ENCODE measurements at regions of chr5 and their contacts with region 1.

Region 1: DNA sequence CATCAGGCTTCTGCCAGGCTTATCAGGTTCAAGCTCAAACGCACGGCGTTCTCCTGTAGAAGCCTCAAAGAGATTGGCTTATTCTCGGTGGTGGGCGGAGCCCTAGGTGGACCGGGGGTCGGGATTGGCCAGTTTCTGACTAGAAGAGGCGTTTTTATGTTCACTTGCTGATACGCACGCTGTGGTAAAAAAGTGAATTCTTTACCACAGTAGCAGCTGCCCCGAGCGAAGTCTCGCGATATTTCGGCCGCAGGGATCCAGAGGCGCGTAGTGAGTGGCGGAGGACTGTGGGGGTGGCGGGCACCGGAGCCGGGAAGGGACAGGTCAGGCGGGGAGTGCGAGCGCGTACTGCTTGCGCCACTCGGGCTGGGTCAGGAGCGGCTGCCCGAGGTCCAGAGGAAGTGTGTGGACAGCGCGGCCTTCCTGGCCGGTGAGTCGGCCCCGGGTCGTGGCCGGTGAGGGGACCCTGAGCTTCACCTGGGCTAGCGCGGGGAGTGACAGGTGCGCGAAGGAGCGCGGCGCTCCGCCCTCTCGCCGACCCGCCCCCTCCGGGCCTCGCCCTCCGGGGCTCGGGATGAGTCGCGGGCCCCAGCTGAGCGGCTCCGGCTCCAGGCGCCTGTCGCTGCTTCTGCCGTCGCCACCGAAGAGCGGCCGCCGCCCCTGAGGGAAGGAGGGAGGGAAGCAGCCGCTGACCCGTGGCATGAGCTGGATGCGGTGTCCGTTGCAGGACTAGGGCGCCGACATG is at the start of gene DMXL1:
- DNase-seq: peak; percentile 88 to 99 (median 92)
- ATAC-seq: peak; percentile 86
- H3K4me3 ChIP-seq: peak within 1 kb of the TSS; percentile 73
- H3K27ac ChIP-seq: peak within 1 kb of the TSS; percentile 84
- H3K4me1 ChIP-seq: peaks cover 7 to 10% of the 10 kb centered on the region in 2 experiments; a peak in 3 of 5 replicates
- H3K27me3 ChIP-seq: no peaks in the 10 kb centered on the region
- CTCF ChIP-seq: no peak; a peak in 1 of 6 replicates
- EP300 ChIP-seq: no peak
- POLR2A ChIP-seq: peak; percentile 86
- RAD21 ChIP-seq: no peak; a peak in 1 of 4 replicates
- polyA plus RNA-seq, gene DMXL1: 8.3 to 8.6 TPM

Region 2: DNA sequence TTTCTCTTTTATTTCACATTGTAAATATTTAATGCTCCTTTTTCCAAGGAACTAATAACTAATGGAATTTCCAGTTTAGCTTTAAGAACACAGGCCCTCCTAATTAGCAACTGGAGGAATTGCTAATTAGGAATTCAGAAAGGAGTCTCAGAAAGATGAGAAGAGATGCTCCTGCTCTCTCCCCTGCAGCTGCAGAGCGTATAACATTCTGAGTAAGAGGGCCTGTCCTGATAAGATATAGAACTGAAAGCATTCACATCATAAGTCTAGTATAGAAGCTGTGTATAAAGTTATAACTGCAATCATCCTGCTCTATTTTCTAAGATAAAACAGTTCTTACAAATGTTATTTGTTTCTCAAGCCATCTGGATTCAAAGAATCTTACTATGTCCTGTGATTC is 165.8 kb before region 1 on chr5:
- CTCF ChIA-PET with region 1: no interaction called
- POLR2A ChIA-PET with region 1: no interaction called
- in situ Hi-C with region 1: no loop called
- intact Hi-C with region 1: no loop called
- DNase-seq: peak in 1 of 4 experiments; percentile 25
- ATAC-seq: peak; percentile 51; the same call in 1 of the 3 replicates
- H3K4me3 ChIP-seq: no peak overlapping the region
- H3K27ac ChIP-seq: no peak overlapping the region
- H3K4me1 ChIP-seq: peaks cover 0 to 4% of the 10 kb centered on the region in 2 experiments; a peak in 2 of 5 replicates
- H3K27me3 ChIP-seq: no peaks in the 10 kb centered on the region
- CTCF ChIP-seq: no peak
- EP300 ChIP-seq: no peak
- POLR2A ChIP-seq: no peak
- RAD21 ChIP-seq: no peak

Region 3: DNA sequence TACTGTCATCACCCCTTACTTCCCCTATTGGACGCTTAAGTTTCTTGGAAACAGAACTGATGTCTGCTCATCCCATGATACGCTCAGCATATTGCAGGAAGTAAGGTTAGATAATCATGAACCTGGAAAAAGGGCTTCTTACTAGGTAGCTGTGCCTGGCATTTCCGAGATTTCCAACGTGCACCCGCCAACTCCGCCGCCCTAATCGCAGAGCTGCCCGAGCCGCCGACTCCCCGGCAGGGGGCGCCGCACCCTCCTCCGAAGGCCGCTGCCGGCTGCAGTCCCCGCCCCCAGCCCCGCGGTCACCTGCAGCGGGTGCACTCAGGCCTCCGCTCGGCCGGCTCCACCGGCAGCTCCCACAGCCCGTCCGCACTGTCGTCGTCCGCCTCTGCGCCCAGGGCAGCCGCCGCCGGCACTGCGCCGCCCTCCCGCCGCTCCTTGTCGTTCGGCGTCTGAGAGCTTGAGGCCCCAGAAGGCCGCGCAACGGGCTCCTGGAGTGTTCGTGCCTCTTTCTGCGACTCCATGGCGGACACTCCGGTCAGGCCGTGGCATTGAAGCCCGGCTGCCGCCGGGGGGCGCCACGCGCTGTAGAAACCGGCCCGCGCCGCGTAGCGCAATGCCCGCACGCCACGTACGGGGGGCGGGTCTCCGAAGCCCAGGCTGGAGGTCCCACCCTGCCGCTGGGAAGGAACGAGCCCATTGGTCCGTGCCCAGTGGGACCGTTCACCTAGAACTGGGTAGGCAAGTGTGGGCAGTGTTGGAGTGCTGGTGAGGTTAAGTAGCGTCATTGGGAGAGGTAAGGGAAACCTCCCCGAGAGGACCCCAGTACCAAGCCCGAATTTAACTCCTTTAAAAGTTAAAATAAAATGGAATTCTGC is 82.8 kb before region 1 on chr5 and contains the start of gene DTWD2:
- CTCF ChIA-PET with region 1: no interaction called
- POLR2A ChIA-PET with region 1: no interaction called
- in situ Hi-C with region 1: no loop called
- intact Hi-C with region 1: loop called (anchors 1 kb)
- DNase-seq: peak; percentile 91 to 96 (median 93)
- ATAC-seq: peak; percentile 95
- H3K4me3 ChIP-seq: peak within 1 kb of the TSS; percentile 98
- H3K27ac ChIP-seq: peak within 1 kb of the TSS; percentile 92
- H3K4me1 ChIP-seq: peaks cover 13 to 27% of the 10 kb centered on the region in 2 experiments; a peak in 4 of 5 replicates
- H3K27me3 ChIP-seq: no peaks in the 10 kb centered on the region
- CTCF ChIP-seq: peak; percentile 89 to 92 (median 91)
- EP300 ChIP-seq: no peak
- POLR2A ChIP-seq: peak; percentile 87
- RAD21 ChIP-seq: peak; percentile 78 to 83
- polyA plus RNA-seq, gene DTWD2: 0.99 to 1.1 TPM

Region 4: GRCh38 chr5:119059740-119060255 is 11.2 kb before region 1 on chr5:
- CTCF ChIA-PET with region 1: no interaction called
- POLR2A ChIA-PET with region 1: interaction called, 12 read pairs
- in situ Hi-C with region 1: no loop called
- intact Hi-C with region 1: no loop called
- DNase-seq: peak; percentile 31 to 82 (median 54)
- ATAC-seq: peak; percentile 92
- H3K4me3 ChIP-seq: no peak overlapping the region
- H3K27ac ChIP-seq: peak overlapping the region; percentile 3; the same call in 1 of the 3 replicates
- H3K4me1 ChIP-seq: peaks cover 4 to 27% of the 10 kb centered on the region in 2 experiments; a peak in 3 of 5 replicates
- H3K27me3 ChIP-seq: no peaks in the 10 kb centered on the region
- CTCF ChIP-seq: no peak
- EP300 ChIP-seq: peak; percentile 56
- POLR2A ChIP-seq: no peak
- RAD21 ChIP-seq: no peak

Region 5: DNA sequence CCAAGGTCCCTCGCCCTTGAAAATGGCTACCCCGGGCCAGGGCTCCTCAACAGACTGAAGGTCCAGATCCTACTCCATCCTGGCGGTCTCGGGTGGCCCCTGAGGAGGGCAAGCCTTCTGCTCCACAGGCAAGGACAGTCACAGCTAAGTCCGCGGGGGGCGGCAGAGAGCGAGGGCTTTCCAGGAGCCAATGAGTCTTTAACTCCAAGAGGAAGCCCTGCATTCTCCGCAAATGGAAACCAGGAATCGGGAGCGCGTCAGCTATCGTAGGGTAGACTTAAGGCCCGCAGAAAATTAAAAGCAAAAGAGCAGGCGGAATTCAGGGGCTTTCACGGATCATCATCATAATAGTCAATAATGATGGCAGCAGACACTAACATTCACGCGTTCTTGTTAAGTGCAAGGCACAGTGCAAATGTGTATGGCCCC is 197.0 kb after region 1 on chr5:
- CTCF ChIA-PET with region 1: no interaction called
- POLR2A ChIA-PET with region 1: no interaction called
- in situ Hi-C with region 1: no loop called
- intact Hi-C with region 1: loop called (anchors 10 kb)
- DNase-seq: peak; percentile 24 to 84 (median 47)
- ATAC-seq: peak; percentile 70
- H3K4me3 ChIP-seq: peak overlapping the region; percentile 84
- H3K27ac ChIP-seq: peak overlapping the region; percentile 85
- H3K4me1 ChIP-seq: peaks cover 26% of the 10 kb centered on the region in 2 experiments
- H3K27me3 ChIP-seq: no peaks in the 10 kb centered on the region
- CTCF ChIP-seq: peak; percentile 27 to 39 (median 32); a peak in 3 of 6 replicates
- EP300 ChIP-seq: no peak
- POLR2A ChIP-seq: no peak
- RAD21 ChIP-seq: no peak

Region 6: DNA sequence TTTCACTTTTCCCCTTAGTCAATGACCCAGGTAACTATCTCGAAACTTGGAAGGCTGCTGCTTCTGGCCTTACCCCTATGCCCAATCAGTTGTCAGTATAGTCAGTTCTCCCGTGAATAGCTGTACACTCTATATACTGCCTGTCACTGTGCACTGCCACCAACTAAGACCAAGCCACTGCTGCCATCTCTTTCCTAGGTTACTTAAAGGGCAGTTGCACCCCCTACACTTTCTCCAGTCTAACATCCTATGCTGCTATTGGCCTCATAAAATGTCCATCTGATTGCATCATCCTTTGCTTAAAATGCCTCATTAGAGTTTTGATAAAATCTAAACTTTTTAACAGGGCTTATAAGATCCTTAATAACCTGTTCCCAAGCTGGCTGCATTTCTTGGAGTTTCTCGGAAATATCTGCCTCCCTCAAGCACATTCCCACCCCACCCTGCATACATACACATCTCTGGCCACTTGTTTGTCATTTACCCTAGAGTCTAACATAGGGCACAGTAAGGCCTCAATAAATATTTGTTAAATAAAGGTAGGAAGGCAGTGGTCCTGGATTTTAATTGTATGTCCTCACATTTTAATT is 252.0 kb after region 1 on chr5:
- CTCF ChIA-PET with region 1: no interaction called
- POLR2A ChIA-PET with region 1: no interaction called
- in situ Hi-C with region 1: no loop called
- intact Hi-C with region 1: loop called (anchors 5 kb)
- DNase-seq: peak in 2 of 4 experiments; percentile 48 to 60
- ATAC-seq: peak; percentile 42
- H3K4me3 ChIP-seq: peak overlapping the region; percentile 30
- H3K27ac ChIP-seq: peak overlapping the region; percentile 92
- H3K4me1 ChIP-seq: peaks cover 57 to 78% of the 10 kb centered on the region in 2 experiments
- H3K27me3 ChIP-seq: no peaks in the 10 kb centered on the region
- CTCF ChIP-seq: no peak
- EP300 ChIP-seq: peak; percentile 41; the same call in 1 of the 2 replicates
- POLR2A ChIP-seq: no peak
- RAD21 ChIP-seq: peak in 1 of 2 experiments; percentile 16; a peak in 1 of 4 replicates

Region 7: DNA sequence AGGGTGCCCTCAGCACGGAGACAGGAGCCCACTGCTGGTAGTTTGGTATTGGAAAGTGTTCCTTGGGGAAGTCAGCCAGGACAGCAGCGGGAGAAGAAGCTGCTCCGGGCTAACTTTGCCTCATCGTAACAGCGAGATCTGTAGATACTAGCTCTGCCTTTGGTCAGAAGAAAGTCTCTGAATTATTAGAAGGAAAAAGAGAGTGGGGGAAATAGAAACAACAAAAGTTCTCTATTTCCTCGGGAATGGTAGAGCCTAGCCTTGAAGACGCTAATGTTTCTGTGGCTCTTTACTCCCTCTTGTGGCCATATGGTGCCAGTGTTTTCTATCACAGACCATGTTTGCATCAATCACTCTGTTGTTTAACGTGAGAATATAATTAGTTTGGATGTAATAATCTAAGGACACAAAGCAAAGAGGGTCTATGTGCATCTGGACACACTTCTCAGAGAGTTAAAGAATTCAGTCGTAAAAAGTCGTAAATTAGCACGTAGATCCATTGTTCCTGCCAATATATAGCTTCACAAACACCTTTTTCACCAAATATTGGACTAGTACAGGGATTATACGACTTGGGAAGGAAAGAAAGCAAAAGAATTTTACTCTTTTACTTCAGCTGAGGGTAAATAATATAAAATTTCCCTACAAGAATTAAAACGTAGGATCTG is 341.1 kb after region 1 on chr5:
- CTCF ChIA-PET with region 1: no interaction called
- POLR2A ChIA-PET with region 1: interaction called, 8 read pairs
- in situ Hi-C with region 1: no loop called
- intact Hi-C with region 1: loop called (anchors 2 kb)
- DNase-seq: peak; percentile 69 to 84 (median 72)
- ATAC-seq: peak; percentile 96
- H3K4me3 ChIP-seq: peak overlapping the region; percentile 6
- H3K27ac ChIP-seq: peak overlapping the region; percentile 27; the same call in 1 of the 3 replicates
- H3K4me1 ChIP-seq: peaks cover 0 to 10% of the 10 kb centered on the region in 2 experiments; a peak in 3 of 5 replicates
- H3K27me3 ChIP-seq: no peaks in the 10 kb centered on the region
- CTCF ChIP-seq: peak; percentile 78 to 94 (median 87)
- EP300 ChIP-seq: no peak
- POLR2A ChIP-seq: no peak
- RAD21 ChIP-seq: peak; percentile 96 to 97

Region 8: DNA sequence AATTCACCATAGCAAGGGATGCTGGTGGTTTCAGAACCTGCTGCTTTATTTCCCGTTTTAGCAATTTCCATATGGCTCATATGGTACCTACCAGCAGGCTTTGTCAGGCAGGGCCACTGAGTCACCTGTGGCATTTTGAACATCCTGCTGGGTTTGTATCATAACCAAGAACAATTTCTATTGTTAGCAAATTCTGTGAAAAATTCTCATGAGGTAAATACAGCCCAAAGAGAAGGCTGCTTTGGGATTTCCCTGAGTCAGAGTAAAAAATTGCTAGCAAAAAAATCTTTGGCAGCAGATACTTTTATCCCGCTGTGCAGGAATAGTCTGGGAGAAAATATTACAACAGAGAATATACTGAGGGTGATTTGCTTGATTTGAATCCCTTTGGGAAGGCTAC is 1445.8 kb after region 1 on chr5:
- CTCF ChIA-PET with region 1: no interaction called
- POLR2A ChIA-PET with region 1: no interaction called
- in situ Hi-C with region 1: no loop called
- intact Hi-C with region 1: loop called (anchors 10 kb)
- DNase-seq: no peak
- ATAC-seq: no peak
- H3K4me3 ChIP-seq: no peak overlapping the region
- H3K27ac ChIP-seq: peak overlapping the region; percentile 50; the same call in 1 of the 3 replicates
- H3K4me1 ChIP-seq: peaks cover 0 to 16% of the 10 kb centered on the region in 2 experiments; a peak in 2 of 5 replicates
- H3K27me3 ChIP-seq: no peaks in the 10 kb centered on the region
- CTCF ChIP-seq: no peak
- EP300 ChIP-seq: no peak
- POLR2A ChIP-seq: no peak
- RAD21 ChIP-seq: no peak

Measured in K562 (cell line).